Right ventricle myocardium inferior (tissue), 1 donor: ENCODE measurements at regions of chr4 and their contacts with region 1.

Region 1: DNA sequence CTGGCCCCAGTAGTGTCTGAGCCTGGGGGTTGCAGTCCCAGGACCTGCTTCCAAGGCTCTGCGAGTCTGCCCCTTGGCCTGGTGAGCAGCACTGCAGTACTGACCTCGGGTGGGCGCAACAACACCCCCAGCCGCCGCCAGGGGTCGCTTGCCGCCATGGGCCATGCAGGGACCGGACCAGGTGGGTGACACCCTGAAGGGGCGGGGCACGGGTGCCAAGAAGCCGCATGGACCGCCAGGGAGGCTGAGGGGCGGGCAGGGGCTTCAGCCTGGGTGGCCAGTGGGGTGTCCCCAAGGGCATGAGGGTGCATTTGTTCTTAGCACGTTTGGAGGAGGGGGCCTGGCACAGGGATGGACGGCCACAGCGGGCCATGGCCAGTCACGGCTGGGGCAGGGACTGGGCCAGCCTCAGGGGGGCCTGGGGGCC is 25.0 kb downstream of the TACC3 start:
- DNase-seq: peak; percentile 83
- ATAC-seq: peak; percentile 72

Region 2: DNA sequence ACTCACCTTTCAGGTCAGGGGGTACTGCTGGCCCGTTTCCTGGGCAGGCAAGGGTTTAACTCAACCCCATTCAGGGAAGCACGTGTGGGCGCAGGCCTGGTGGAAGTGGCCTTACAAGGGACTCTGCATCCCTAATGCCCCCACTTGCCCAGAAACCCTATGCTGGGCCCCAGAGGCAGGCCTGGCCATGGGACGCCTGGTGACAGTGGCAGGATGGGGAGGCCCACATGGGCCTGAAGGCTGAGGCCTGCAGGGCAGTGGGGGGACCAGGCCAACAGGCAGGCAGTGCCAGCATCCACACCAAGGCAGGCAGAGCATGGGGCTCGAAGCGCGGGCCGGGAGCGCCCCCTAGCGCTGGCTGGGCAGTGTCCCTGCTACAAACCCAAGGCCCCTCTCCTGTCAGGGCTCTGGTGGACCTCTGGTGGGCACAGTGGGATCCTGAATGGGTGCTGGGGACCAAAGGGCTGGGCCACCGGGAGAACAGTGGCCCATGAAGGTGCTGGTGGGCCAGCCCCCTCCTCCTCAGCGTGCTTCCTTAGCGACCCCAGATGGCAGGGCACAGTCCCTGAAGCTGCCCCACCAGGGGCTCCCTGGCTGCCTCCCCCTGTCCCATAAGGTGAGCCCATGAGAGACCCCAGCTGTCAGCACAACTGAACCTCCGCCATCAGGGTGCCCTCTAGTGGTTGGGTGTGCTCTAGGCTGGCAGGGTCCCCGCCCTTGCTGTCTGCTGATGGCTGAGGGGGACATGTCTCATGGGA is 63.7 kb after region 1 on chr4:
- intact Hi-C with region 1: loop called (anchors 1 kb)
- DNase-seq: peak; percentile 80
- ATAC-seq: peak; percentile 55